ENCODE measurements at regions of chr18 and their contacts with region 1.

Region 1: DNA sequence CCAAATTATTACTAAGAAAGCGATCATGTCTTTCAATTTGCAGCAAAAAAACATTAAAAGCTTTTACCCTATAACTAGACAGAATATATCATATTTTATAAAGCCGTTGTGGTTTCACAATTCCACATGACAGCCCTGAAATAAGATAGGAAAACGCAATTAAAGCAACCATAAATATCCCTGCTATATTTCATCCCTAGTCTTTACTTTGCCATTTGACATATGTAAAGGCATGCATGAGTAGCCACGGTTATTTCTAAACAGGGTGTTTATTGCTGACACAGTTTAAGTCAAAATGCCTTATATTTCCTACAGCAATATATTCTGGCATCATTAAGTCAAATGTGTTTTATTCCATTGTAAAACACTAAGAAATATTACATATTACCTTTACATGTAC is 239.9 kb downstream of the DSEL start:
- DNase-seq: no peak
- ATAC-seq: no peak
- H3K4me3 ChIP-seq: no peak overlapping the region
- H3K27ac ChIP-seq: no peak overlapping the region
- H3K4me1 ChIP-seq: no peaks in the 10 kb centered on the region
- H3K27me3 ChIP-seq: no peaks in the 10 kb centered on the region
- CTCF ChIP-seq: no peak

Region 2: DNA sequence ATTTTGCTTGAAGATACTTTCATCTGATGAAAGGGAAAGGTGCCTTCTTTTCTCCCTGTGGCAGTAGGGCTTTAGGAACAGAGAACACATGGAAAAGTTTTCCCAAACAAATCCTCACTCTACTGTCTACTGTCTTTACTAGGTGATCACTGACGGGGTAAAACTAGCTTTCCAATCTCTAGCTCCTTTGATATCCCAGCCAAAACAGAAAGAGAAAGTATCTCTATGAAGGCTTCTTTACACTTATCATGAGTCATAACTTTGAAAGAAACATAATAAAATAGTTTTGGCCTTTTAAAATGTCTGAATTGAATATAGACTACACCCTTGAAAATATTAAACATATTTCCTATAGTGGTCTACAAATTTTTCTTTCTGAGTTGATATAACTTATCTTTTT is 25.4 kb after region 1 on chr18:
- CTCF ChIA-PET with region 1: no interaction called
- POLR2A ChIA-PET with region 1: no interaction called
- in situ Hi-C with region 1: no loop called
- intact Hi-C with region 1: loop called (anchors 1 kb)
- DNase-seq: no peak
- ATAC-seq: no peak
- H3K4me3 ChIP-seq: no peak overlapping the region
- H3K27ac ChIP-seq: no peak overlapping the region
- H3K4me1 ChIP-seq: no peaks in the 10 kb centered on the region
- H3K27me3 ChIP-seq: no peaks in the 10 kb centered on the region
- CTCF ChIP-seq: no peak